HEK293 (cell line): ENCODE measurements at regions of chr2 and their contacts with region 1.

Region 1: GRCh38 chr2:64330281-64331113 is 123.5 kb upstream of the LGALSL start:
- H3K4me3 ChIP-seq: no peak overlapping the region
- H3K27ac ChIP-seq: no peak overlapping the region
- H3K4me1 ChIP-seq: no peaks in the 10 kb centered on the region; the same call in 1 of the 2 replicates
- CTCF ChIP-seq: peak; percentile 65

Region 2: DNA sequence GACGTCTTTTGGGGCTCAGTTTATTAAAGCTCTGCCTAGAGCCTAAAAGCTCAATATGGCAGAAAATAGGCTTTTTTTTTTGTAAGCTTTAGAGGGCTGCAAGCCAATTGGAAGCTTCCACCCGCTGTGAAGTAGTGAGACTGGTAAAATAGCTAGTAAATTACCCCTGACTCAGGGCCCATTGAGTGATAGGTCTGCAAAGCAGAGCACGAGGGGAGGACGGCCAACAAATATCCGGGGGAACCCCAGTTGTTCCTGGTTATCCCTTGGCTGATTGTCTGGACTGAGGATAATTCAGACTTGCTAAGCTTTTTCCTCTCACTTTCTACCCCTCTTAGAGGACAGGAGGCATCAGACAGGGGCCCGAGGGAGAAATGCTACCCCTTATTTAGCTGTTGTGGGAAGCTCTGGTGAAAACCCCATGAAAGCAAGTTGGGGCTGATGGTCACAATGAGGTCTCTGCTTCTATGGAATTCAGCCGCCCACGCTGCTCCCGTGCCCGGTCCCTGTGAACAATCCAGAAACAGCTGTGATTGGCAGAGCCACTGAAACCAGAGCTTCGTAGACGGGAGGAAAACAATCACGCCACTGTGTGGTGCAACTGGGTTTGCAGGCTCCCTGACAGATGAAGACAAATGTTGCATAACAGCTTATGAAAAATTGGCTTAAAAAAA is 18.4 kb before region 1 on chr2:
- CTCF ChIA-PET with region 1: interaction called, 14 read pairs
- POLR2A ChIA-PET with region 1: no interaction called
- H3K4me3 ChIP-seq: no peak overlapping the region
- H3K27ac ChIP-seq: no peak overlapping the region
- H3K4me1 ChIP-seq: peaks cover 7% of the 10 kb centered on the region; the same call in 1 of the 2 replicates
- CTCF ChIP-seq: peak; percentile 33; the same call in 1 of the 2 replicates

Region 3: GRCh38 chr2:64344976-64345576 is 14.6 kb after region 1 on chr2:
- CTCF ChIA-PET with region 1: interaction called, 23 read pairs
- POLR2A ChIA-PET with region 1: no interaction called
- H3K4me3 ChIP-seq: no peak overlapping the region
- H3K27ac ChIP-seq: no peak overlapping the region
- H3K4me1 ChIP-seq: no peaks in the 10 kb centered on the region
- CTCF ChIP-seq: no peak

Region 4: GRCh38 chr2:64404002-64404731 is 73.7 kb after region 1 on chr2:
- CTCF ChIA-PET with region 1: no interaction called
- POLR2A ChIA-PET with region 1: no interaction called
- H3K4me3 ChIP-seq: no peak overlapping the region
- H3K27ac ChIP-seq: no peak overlapping the region
- H3K4me1 ChIP-seq: peaks cover 15% of the 10 kb centered on the region
- CTCF ChIP-seq: no peak

Region 5: GRCh38 chr2:64454386-64455332 is 124.2 kb after region 1 on chr2:
- CTCF ChIA-PET with region 1: interaction called, 11 read pairs
- POLR2A ChIA-PET with region 1: interaction called, 4 read pairs
- H3K4me3 ChIP-seq: peak overlapping the region; percentile 77
- H3K27ac ChIP-seq: peak overlapping the region; percentile 84; the same call in 1 of the 2 replicates
- H3K4me1 ChIP-seq: peaks cover 10% of the 10 kb centered on the region; the same call in 1 of the 2 replicates
- CTCF ChIP-seq: no peak

Region 6: GRCh38 chr2:64482765-64483504 is 152.4 kb after region 1 on chr2:
- CTCF ChIA-PET with region 1: interaction called, 155 read pairs
- POLR2A ChIA-PET with region 1: interaction called, 4 read pairs
- H3K4me3 ChIP-seq: no peak overlapping the region
- H3K27ac ChIP-seq: no peak overlapping the region
- H3K4me1 ChIP-seq: no peaks in the 10 kb centered on the region
- CTCF ChIP-seq: no peak

Region 7: DNA sequence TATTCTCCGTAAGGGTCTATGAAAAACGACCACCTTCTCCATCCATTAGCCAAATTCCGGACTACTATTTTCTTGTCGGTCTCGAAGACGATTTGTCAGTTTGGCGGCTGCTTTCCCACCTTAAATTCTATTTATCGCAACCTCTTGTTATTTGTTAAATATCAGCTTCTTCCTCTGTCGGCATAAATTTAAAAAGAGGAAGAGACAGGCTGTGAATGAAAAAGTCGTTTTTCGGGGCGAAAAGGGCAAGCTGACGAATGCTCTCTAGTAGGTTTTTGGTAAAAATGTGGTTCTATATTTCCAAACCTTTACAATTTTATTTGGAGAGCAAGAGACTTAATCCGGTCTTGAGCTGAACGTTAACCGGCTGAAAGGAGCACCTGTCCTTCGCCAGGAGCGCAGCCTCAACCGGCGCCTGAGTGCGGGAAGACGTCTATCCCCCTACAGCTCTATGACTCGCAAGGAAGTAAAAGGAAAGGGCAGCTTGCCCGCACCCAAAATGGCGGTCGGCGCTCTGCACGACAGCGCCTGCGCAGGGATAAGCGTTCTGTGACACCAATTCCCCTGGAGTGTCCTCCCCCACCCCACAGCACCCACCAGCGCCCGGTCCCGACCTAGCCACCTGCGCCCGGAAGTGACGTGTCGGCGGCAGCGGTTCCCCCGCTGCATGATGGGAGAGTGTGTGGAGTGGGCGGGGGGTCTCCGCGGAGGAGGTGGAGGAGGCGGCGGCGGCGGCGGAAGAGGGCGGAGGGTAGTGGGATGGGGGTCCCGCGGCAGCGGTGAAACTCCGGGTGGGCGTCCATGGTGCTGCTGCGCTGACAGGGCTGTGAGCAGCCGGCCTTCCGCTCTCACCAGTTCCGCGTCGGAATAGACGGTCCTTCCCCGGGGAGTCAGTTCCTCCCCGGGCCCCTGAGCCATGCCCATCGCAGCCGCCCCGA is 193.4 kb after region 1 on chr2 and contains the start of gene AFTPH:
- CTCF ChIA-PET with region 1: interaction called, 25 read pairs
- POLR2A ChIA-PET with region 1: interaction called, 5 read pairs
- H3K4me3 ChIP-seq: peak within 1 kb of the TSS; percentile 99
- H3K27ac ChIP-seq: peak within 1 kb of the TSS; percentile 80
- H3K4me1 ChIP-seq: no peaks in the 10 kb centered on the region; the same call in 1 of the 2 replicates
- CTCF ChIP-seq: peak; percentile 39

Region 8: DNA sequence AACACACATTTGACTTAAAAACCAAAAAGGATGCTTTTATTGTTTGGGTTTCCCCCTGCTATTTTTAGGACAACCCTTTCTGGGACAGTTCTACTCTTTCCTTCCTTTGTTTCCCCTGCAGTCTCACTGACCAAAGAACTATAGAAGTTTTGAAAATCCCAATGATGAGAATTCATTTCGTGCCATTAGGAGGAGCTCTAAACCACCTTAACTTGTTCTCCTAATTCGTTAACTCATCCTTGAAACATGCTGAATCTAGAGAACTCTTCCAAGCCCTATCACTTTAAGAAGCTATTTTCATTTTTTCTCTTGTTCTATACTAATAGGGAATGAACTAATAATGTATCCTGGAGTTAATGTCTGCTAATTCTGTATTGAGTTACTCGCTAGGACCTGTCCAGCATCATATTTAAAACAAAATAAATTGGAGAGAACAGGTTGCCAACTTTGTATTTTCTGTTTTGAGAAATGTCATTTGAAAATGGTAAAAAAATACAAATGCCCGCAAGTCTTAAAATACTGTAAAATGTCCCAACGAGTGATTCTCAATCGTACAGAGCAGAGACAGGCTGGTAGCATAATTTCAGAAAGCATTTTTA is 256.5 kb after region 1 on chr2:
- CTCF ChIA-PET with region 1: interaction called, 17 read pairs
- POLR2A ChIA-PET with region 1: no interaction called
- H3K4me3 ChIP-seq: no peak overlapping the region
- H3K27ac ChIP-seq: no peak overlapping the region
- H3K4me1 ChIP-seq: no peaks in the 10 kb centered on the region
- CTCF ChIP-seq: no peak; the same call in 1 of the 2 replicates

Region 9: GRCh38 chr2:64635976-64636911 is 305.7 kb after region 1 on chr2:
- CTCF ChIA-PET with region 1: no interaction called
- POLR2A ChIA-PET with region 1: no interaction called
- H3K4me3 ChIP-seq: no peak overlapping the region
- H3K27ac ChIP-seq: no peak overlapping the region
- H3K4me1 ChIP-seq: peaks cover 21% of the 10 kb centered on the region
- CTCF ChIP-seq: no peak